Cardiac septum (tissue), 1 donor: ENCODE measurements at regions of chr1 and their contacts with region 1.

Region 1: GRCh38 chr1:115251856-115252255 is 86.2 kb downstream of the NGF start:
- DNase-seq: no peak

Region 2: GRCh38 chr1:115184951-115185331 is 66.9 kb before region 1 on chr1:
- intact Hi-C with region 1: loop called (anchors 5 kb)
- DNase-seq: no peak

Region 3: DNA sequence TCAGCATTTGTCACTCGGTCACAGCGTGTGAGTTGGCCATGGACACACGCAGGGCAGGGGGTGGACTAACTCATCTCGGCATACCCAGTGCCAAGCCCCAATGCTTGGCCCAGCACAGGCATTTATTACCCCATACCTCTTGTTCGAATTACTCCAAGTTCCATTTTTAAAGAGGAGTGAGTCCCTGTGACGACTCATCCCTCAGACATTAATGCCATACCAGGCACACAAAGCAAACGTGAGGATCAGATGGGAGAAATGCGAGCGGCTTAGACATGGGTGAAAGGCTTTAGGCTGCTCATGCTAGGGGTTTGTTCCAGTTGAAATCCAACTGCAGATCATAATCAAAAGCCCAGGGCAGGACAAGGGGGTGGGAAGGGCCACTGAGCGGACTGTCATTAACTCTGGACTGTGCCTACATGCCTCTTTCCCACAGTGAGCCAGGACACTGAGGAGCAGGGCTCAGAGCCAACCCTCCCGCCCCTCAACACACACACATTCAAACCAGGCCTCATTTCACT is 204.6 kb after region 1 on chr1:
- intact Hi-C with region 1: loop called (anchors 5 kb)
- DNase-seq: no peak